ENCODE measurements at regions of chr12 and their contacts with region 1.

Region 1: DNA sequence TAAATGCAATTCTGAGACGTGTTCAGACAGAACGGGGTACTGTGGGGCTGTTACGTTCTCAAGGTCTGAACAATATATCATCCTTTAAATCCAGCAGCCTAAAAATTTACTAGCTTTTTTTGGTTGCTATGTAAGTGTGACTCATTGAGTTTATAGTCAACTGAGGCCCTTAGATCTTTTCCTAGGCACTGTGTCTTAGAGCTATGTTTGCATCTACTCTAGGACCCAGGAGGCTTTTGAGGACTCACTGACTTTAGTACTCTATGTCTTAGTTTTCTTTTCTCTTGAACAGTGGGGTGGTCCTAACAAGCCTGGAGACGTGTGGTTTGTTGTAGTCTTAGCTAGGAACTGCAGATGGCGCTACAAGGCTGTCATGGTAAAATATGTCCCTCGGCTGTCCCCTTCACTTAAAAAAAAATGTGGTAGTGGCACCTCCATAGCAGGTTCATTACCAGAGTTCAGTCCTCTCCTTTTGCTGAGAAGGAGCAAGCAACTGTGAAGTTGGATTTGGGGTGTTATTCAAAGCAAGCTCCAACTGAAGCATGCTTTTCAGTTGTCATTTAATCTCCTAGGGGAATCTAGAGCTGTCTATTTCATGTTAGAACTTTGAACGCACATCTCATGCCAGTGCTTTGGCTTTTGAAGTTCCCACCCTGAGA is 8.7 kb upstream of the SPATS2 start:
- DNase-seq: peak; percentile 83
- ATAC-seq: peak; percentile 91
- H3K4me3 ChIP-seq: no peak overlapping the region
- H3K4me3 Mint-ChIP-seq: no peak overlapping the region
- H3K27ac ChIP-seq: no peak overlapping the region
- H3K27ac Mint-ChIP-seq: no peak overlapping the region
- H3K4me1 ChIP-seq: peaks cover 3 to 5% of the 10 kb centered on the region in 2 donors
- H3K4me1 Mint-ChIP-seq: peaks cover 2% of the 10 kb centered on the region
- H3K27me3 ChIP-seq: peaks cover 0 to 13% (median 7%) of the 10 kb centered on the region in 4 experiments
- H3K27me3 Mint-ChIP-seq: peaks cover 32% of the 10 kb centered on the region
- CTCF ChIP-seq: peak; percentile 85

Region 2: DNA sequence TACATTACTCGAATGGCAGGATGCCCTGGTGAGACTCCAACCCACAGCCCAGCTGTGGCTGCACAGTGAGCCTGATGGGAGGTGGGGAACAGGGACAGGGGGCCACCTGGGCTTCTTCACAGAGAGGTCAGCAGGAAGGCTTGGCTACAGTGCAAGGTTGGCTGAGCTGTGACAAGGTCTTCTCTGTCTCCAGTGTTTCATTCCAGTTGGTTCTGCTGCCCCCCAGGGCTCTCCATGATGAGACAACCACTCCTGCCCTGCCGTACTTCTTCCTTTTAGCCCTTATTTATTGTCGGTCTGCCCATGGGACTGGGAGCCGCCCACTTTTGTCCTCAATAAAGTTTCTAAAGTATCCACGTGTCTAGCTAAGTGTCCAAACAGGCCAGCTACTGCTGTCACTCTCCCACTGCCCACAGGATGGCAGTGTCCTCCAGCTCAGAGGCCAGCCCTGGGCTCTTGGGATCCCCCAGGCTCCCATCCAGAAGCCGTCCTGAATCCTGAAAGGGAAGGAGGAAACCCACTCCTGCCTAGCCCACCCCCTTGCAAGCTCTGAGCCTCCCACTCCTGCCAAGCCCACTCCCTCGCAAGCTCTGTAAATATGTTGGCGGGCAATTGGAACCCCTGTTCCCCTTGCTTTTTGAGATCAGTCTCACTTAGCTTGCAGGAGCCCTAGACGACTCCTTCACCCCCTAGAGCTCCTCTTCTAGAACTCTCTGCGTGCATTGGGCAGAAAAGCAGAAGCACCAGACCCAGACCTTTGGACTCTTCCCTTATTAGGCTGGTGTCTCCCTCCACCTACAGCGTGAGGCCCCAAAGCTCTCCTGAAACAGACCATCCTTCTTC is 27.0 kb before region 1 on chr12:
- CTCF ChIA-PET with region 1: interaction called, 13 read pairs
- POLR2A ChIA-PET with region 1: no interaction called
- intact Hi-C with region 1: no loop called
- DNase-seq: peak; percentile 37
- ATAC-seq: no peak
- H3K4me3 ChIP-seq: no peak overlapping the region
- H3K4me3 Mint-ChIP-seq: peak overlapping the region; percentile 29
- H3K27ac ChIP-seq: no peak overlapping the region
- H3K27ac Mint-ChIP-seq: no peak overlapping the region
- H3K4me1 ChIP-seq: peaks cover 19 to 23% of the 10 kb centered on the region in 2 donors
- H3K4me1 Mint-ChIP-seq: peaks cover 19% of the 10 kb centered on the region
- H3K27me3 ChIP-seq: peaks cover 0 to 51% (median 32%) of the 10 kb centered on the region in 4 experiments
- H3K27me3 Mint-ChIP-seq: peaks cover 38% of the 10 kb centered on the region
- CTCF ChIP-seq: peak; percentile 45

Region 3: DNA sequence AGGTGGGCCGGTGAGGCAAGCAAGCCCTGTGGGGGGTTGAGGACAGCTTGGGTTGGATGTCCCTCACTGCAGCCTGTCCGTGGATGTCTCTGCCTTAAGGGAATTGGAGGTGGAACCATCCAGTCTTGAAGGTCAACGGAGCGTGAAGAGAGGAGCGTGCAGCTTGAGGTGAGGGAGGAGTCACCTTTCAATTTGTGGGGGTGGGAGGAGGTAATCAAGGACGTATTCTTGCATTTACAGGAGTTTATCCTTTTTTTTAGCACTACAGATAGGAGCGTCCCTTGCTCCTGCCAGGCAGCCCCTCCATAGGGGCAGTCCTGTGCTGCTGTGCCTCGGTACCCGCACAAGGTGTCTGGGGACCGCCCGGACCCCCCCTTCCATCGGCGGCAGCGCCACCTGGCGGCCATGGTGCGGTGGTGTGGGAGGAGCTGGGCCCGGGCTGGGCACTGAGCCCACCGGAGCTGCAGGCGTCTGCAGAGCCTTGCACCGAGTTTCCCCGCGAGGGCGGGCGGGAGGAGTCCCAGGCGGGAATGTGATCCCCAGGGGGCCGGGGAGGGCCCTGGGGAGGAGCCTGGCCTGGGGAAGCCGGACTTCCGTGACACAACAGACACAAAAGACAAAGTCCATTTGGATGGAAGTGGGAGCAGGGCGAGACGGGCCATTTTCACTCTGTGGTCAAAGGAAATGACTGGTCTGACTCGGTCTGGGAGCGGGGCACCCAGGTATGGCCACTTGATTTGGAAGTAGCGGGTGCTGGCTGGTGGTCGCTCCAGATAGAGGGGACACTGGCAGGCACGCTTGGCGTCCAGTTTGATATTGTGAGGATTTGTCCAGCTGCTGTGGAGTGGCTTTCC is 11.0 kb before region 1 on chr12:
- CTCF ChIA-PET with region 1: interaction called, 77 read pairs
- POLR2A ChIA-PET with region 1: no interaction called
- intact Hi-C with region 1: loop called (anchors 1 kb)
- DNase-seq: peak; percentile 83
- ATAC-seq: peak; percentile 69
- H3K4me3 ChIP-seq: peak overlapping the region; percentile 11 to 61 (median 39)
- H3K4me3 Mint-ChIP-seq: peak overlapping the region; percentile 90
- H3K27ac ChIP-seq: no peak overlapping the region
- H3K27ac Mint-ChIP-seq: no peak overlapping the region
- H3K4me1 ChIP-seq: peaks cover 56 to 60% of the 10 kb centered on the region in 2 donors
- H3K4me1 Mint-ChIP-seq: peaks cover 51% of the 10 kb centered on the region
- H3K27me3 ChIP-seq: peaks cover 0 to 82% (median 61%) of the 10 kb centered on the region in 4 experiments
- H3K27me3 Mint-ChIP-seq: peaks cover 53% of the 10 kb centered on the region
- CTCF ChIP-seq: peak; percentile 99

Region 4: DNA sequence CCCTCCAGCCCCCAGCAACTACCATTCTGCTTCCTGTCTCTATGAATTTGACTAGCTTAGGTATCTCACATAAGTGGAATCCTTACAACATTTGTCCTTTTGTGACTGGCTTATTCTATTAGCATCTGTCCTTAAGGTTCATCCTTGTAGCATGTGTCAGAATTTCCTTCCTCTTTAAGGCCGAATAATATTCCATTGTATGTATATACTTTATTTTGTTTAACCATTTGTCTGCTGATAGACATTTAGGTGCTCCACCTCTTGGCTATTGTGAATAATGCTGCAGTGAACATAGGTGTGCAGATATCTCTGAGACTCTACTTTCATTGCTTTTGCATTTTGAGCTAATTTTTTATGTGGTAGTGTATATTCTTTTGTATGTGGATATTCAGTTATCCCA is 84.3 kb after region 1 on chr12:
- CTCF ChIA-PET with region 1: interaction called, 10 read pairs
- POLR2A ChIA-PET with region 1: no interaction called
- intact Hi-C with region 1: no loop called
- DNase-seq: no peak
- ATAC-seq: no peak
- H3K4me3 ChIP-seq: no peak overlapping the region
- H3K4me3 Mint-ChIP-seq: no peak overlapping the region
- H3K27ac ChIP-seq: no peak overlapping the region
- H3K27ac Mint-ChIP-seq: no peak overlapping the region
- H3K4me1 ChIP-seq: no peaks in the 10 kb centered on the region
- H3K4me1 Mint-ChIP-seq: no peaks in the 10 kb centered on the region
- H3K27me3 ChIP-seq: no peaks in the 10 kb centered on the region
- H3K27me3 Mint-ChIP-seq: no peaks in the 10 kb centered on the region
- CTCF ChIP-seq: no peak

Region 5: DNA sequence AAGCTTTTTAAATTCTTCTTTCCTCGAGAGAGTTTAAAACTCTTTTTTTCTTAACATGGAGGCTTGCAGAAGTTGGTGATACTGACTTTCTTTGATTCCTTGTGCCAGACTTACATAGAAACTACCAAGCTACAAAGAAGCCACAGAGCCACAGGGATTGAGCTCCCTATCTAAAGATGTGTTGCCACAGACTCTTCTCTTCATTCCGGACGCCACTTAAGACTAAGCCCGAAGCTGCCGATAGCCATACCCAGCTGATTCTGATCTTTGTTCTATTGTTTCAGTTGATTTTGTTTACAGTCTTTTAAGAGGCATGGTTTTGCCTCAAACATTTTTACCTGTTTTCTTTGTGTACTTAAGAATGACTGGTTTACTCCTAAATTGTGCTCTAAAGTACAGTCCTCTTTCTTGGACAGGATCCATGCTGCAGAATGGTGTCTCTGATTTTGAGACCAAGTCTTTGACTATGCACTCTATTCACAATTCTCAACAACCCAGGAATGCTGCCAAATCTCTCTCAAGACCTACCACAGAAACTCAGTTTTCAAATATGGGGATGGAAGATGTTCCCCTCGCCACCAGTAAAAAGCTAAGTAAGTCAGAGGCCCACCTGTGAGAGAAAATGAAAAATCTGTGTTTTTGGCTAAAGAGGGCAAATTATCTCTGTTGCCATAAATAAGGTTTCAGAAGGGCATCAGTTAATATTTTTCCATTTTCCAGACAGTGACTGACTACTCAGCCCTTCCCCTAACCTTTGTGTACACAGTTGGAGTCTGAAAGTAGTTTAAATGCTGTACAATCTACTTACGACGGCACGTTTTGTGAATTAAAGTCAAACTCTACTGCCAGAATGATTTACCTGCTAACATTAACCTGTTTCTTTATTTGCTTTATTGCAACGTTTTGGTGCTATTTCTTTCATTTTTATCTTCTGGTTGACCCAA is 138.1 kb after region 1 on chr12:
- CTCF ChIA-PET with region 1: interaction called, 13 read pairs
- POLR2A ChIA-PET with region 1: no interaction called
- intact Hi-C with region 1: no loop called
- DNase-seq: no peak
- ATAC-seq: no peak
- H3K4me3 ChIP-seq: no peak overlapping the region
- H3K4me3 Mint-ChIP-seq: no peak overlapping the region
- H3K27ac ChIP-seq: no peak overlapping the region
- H3K27ac Mint-ChIP-seq: no peak overlapping the region
- H3K4me1 ChIP-seq: no peaks in the 10 kb centered on the region
- H3K4me1 Mint-ChIP-seq: no peaks in the 10 kb centered on the region
- H3K27me3 ChIP-seq: no peaks in the 10 kb centered on the region
- H3K27me3 Mint-ChIP-seq: no peaks in the 10 kb centered on the region
- CTCF ChIP-seq: no peak

Region 6: GRCh38 chr12:49553512-49554088 is 195.0 kb after region 1 on chr12:
- CTCF ChIA-PET with region 1: interaction called, 38 read pairs
- POLR2A ChIA-PET with region 1: no interaction called
- intact Hi-C with region 1: no loop called
- DNase-seq: peak; percentile 63
- ATAC-seq: peak; percentile 51
- H3K4me3 ChIP-seq: no peak overlapping the region
- H3K4me3 Mint-ChIP-seq: no peak overlapping the region
- H3K27ac ChIP-seq: no peak overlapping the region
- H3K27ac Mint-ChIP-seq: no peak overlapping the region
- H3K4me1 ChIP-seq: peaks cover 7 to 9% of the 10 kb centered on the region in 2 donors
- H3K4me1 Mint-ChIP-seq: peaks cover 5% of the 10 kb centered on the region
- H3K27me3 ChIP-seq: peaks cover 0 to 17% (median 4%) of the 10 kb centered on the region in 4 experiments
- H3K27me3 Mint-ChIP-seq: peaks cover 7% of the 10 kb centered on the region
- CTCF ChIP-seq: peak; percentile 63

Measured in B cell (primary cell).